ENCODE measurements at regions of chr14 and their contacts with region 1.

Region 1: DNA sequence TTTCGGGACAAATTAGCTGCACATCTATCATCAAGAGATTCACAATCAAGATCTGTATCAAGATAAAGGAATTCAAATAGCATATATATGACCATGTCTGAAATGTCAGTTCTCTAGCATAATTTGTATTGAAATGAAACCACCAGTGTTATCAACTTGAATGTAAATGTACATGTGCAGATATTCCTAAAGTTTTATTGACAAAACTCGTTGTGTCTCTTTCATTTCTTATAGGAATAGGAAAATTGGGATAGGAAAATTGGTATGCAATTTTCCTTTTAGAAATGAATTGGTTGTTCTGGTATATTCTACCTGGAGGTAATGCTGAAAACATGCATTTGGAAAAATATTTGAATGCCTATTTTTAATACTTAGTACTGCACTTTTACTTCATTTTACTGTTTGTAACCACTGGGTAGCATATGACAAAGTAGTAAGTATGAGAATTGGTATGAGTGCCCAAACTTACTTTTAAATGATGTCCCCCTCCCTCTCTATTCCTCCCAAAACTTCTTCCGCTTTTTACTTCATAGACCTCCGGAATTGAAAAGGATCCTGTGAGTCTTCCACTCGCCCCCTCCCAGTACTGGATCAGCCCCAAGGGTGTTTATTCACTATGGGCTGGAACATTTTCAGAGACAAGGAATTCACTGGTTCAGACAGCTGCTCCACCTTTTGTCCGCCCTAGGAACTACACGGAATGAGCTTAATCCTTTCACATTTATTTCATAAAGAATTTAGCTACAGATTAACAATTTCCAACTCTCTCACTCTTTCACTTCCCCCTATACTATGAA is 21.0 kb downstream of the CNIH1 start:
- DNase-seq: no peak
- ATAC-seq: peak; percentile 78
- H3K4me3 ChIP-seq: no peak overlapping the region
- H3K27ac ChIP-seq: no peak overlapping the region
- H3K4me1 ChIP-seq: no peaks in the 10 kb centered on the region
- H3K27me3 ChIP-seq: no peaks in the 10 kb centered on the region
- CTCF ChIP-seq: peak; percentile 43 to 47 (median 44)
- EP300 ChIP-seq: no peak
- POLR2A ChIP-seq: no peak
- RAD21 ChIP-seq: peak; percentile 20; the same call in 1 of the 2 replicates

Region 2: GRCh38 chr14:54338696-54339317 is 81.4 kb before region 1 on chr14:
- CTCF ChIA-PET with region 1: no interaction called
- POLR2A ChIA-PET with region 1: no interaction called
- RAD21 ChIA-PET with region 1: no interaction called
- SMC1A ChIA-PET with region 1: no interaction called
- in situ Hi-C with region 1: no loop called
- intact Hi-C with region 1: no loop called
- DNase-seq: no peak
- ATAC-seq: peak; percentile 18; the same call in 1 of the 3 replicates
- H3K4me3 ChIP-seq: no peak overlapping the region
- H3K27ac ChIP-seq: no peak overlapping the region
- H3K4me1 ChIP-seq: no peaks in the 10 kb centered on the region
- H3K27me3 ChIP-seq: peaks cover 0 to 2% of the 10 kb centered on the region in 2 experiments; a peak in 1 of 4 replicates
- CTCF ChIP-seq: peak; percentile 35 to 41 (median 41); a peak in 4 of 6 replicates
- EP300 ChIP-seq: no peak
- POLR2A ChIP-seq: no peak
- RAD21 ChIP-seq: peak; percentile 64

Region 3: GRCh38 chr14:54366736-54367735 is 53.2 kb before region 1 on chr14:
- CTCF ChIA-PET with region 1: interaction called, 13 read pairs
- POLR2A ChIA-PET with region 1: no interaction called
- RAD21 ChIA-PET with region 1: interaction called, 4 read pairs
- SMC1A ChIA-PET with region 1: no interaction called
- in situ Hi-C with region 1: no loop called
- intact Hi-C with region 1: loop called (anchors 1 kb)
- DNase-seq: no peak
- ATAC-seq: peak; percentile 95
- H3K4me3 ChIP-seq: no peak overlapping the region
- H3K27ac ChIP-seq: no peak overlapping the region
- H3K4me1 ChIP-seq: no peaks in the 10 kb centered on the region
- H3K27me3 ChIP-seq: 0 out of 4 replicates have a peak, but pooled peaks cover 0 to 3% of the 10 kb centered on the region in 2 experiments
- CTCF ChIP-seq: peak; percentile 54 to 74 (median 58); a peak in 5 of 6 replicates
- EP300 ChIP-seq: no peak
- POLR2A ChIP-seq: no peak
- RAD21 ChIP-seq: peak; percentile 75

Region 4: DNA sequence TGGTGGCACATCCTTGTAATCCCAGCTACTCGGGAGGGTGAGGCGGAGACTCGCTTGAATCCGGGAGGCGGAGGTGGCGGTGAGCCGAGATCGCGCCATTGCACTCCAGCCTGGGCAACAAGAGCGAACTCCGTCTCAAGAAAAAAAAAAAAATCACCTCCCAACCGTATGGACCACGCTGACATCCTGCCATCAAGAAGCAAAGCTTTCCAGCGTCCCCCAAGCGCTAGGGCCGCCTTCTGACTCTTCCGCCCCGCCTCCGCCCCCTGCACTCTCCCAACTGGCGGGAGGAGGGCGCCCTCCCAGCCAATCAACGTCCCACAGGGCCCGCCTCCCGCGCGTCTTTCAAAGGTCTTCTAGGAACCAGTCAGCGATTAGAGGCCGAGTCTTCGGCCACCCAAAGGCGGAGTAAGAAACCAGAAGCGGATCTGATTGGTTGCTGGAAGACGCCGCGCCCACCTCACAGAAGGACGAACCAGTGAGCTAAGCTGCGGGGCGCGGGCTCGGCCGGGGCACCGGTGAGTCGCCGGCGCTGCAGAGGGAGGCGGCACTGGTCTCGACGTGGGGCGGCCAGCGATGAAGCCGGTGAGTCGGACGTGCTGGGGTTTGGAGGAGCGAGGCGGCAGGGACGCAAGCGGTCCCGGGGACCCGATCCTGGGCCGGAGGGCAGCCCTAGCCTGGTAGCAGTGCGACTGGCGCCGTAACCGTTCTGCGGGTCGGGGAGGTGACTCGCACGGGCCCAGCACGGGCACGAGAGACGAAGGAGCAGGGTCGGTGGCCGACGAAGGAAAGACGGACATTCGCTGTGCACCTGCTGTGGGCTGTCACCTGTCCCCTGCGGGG is 23.5 kb before region 1 on chr14 and contains the start of gene CDKN3:
- CTCF ChIA-PET with region 1: interaction called, 14 read pairs
- POLR2A ChIA-PET with region 1: no interaction called
- RAD21 ChIA-PET with region 1: interaction called, 4 read pairs
- SMC1A ChIA-PET with region 1: interaction called, 5 read pairs
- in situ Hi-C with region 1: no loop called
- intact Hi-C with region 1: no loop called
- DNase-seq: peak; percentile 95
- ATAC-seq: peak; percentile 97
- H3K4me3 ChIP-seq: peak within 1 kb of the TSS; percentile 75
- H3K27ac ChIP-seq: peak within 1 kb of the TSS; percentile 81
- H3K4me1 ChIP-seq: no peaks in the 10 kb centered on the region
- H3K27me3 ChIP-seq: no peaks in the 10 kb centered on the region
- CTCF ChIP-seq: peak in 2 of 3 experiments; percentile 39 to 50; a peak in 3 of 6 replicates
- EP300 ChIP-seq: no peak
- POLR2A ChIP-seq: peak; percentile 99
- RAD21 ChIP-seq: no peak
- polyA plus RNA-seq, gene CDKN3: 173 to 197 TPM

Measured in GM12878 (cell line).